ENCODE measurements at regions of chr5 and their contacts with region 1.

Region 1: GRCh38 chr5:80654391-80655230 is at the starts of genes DHFR and MSH3:
- DNase-seq: peak; percentile 97
- H3K4me3 ChIP-seq: no peak within 1 kb of the TSS
- H3K27ac ChIP-seq: peak within 1 kb of the TSS; percentile 83
- H3K4me1 ChIP-seq: peaks cover 11% of the 10 kb centered on the region
- CTCF ChIP-seq: peak; percentile 52
- total RNA-seq, gene DHFR: 99.9 and 115 TPM in 2 replicates
- total RNA-seq, gene MSH3: 15.4 and 17.1 TPM in 2 replicates

Region 2: DNA sequence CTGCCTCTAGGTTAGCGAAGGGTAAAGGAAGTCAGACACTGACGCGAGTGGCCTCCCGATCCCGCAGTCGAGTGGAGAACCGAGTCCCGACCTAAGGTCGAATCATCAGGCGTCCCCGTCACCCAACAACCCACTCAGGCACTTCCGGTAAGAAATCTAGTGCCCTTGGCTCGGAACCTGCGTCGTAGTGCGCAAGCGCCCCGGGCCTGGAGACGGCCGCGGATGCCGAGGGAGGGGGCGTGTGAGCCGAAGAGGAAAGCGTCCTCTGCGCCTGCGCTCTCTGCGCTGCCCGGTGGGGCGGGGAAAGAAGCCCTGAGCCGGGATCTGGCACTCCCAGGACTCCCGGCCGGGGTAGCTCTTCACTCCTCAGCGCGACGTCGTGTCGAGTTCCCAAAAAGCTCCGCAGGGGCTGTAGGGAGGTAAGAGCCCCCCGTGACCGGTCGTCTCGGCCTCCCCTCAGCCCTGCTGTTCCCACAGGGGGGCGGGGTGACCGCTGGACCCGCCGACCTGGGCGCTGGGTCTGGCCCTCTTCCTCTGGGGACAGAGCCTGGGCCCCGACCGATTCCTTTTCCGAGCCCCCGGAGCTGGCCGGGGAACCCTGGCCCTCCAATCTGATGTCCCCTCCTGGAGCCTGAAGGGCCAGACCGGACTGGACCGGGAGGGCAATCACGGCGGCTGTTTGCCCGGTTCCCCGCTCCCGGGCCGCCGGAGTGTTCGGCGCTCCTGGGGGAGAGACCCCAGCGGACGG is 246.7 kb before region 1 on chr5 and contains the start of gene ZFYVE16:
- CTCF ChIA-PET with region 1: no interaction called
- POLR2A ChIA-PET with region 1: interaction called, 6 read pairs
- intact Hi-C with region 1: loop called (anchors 10 kb)
- DNase-seq: peak; percentile 97
- H3K4me3 ChIP-seq: peak within 1 kb of the TSS; percentile 99
- H3K27ac ChIP-seq: peak within 1 kb of the TSS; percentile 56
- H3K4me1 ChIP-seq: peaks cover 12% of the 10 kb centered on the region
- CTCF ChIP-seq: 0 out of 2 replicates have a peak, but pooled peaks have one; percentile 21
- total RNA-seq, gene ZFYVE16: 8.0 and 8.7 TPM in 2 replicates

Region 3: DNA sequence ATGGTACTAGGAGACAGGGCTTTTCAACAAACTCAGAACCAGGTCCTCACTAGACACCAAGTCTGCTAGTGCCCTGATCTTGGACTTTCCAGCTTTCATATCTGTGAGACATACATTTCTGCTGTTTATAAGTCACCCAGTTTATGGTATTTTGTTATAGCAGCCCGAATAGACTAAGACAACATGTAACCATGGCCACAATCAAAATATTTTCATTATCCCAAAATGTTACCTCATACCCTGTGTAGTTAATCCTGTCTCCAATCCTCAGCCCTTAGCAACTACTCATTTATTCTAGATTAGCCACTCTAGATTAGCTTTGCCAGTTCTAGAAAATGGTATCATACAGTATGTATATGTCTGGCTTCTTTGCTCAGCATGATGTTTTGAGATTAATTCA is 1310.9 kb after region 1 on chr5:
- CTCF ChIA-PET with region 1: no interaction called
- POLR2A ChIA-PET with region 1: no interaction called
- intact Hi-C with region 1: no loop called
- DNase-seq: no peak
- H3K4me3 ChIP-seq: no peak overlapping the region
- H3K27ac ChIP-seq: no peak overlapping the region
- H3K4me1 ChIP-seq: peaks cover 3% of the 10 kb centered on the region
- CTCF ChIP-seq: no peak

Measured in OCI-LY7 (cell line).